K562 (cell line): ENCODE measurements at regions of chr2 and their contacts with region 1.

Region 1: DNA sequence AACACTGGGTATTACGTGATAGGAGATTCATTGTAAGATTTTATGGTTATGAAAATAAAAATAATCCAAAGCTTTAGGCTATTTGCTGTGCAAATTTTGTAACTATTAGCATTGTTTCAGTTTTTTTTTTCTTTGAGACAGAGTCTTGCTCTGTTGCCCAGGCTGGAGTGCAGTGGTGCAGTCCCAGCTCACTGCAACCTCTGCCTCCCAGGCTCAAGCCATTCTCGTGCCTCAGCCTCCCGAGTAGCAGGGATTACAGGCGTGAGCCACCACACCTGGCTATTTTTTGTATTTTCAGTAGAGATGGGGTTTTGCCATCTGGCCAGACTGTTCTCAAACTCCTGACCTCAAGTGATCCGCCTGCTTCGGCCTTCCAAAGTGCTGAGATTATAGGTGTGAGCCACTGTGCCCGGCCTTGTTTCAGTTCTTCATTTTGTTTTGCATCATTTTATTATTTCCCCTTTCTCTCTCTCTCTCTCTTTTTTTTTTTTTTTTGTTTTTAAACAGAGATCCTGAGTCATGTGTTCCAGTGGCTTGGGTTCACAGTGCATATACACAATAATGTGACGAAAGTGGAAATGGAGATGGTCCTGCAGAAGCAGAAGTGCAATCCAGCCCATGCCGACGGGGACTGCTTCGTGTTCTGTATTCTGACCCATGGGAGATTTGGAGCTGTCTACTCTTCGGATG is 25.8 kb downstream of the CASP10 start:
- DNase-seq: no peak
- ATAC-seq: no peak
- H3K4me3 ChIP-seq: no peak overlapping the region
- H3K27ac ChIP-seq: no peak overlapping the region
- H3K4me1 ChIP-seq: no peaks in the 10 kb centered on the region
- H3K27me3 ChIP-seq: no peaks in the 10 kb centered on the region
- CTCF ChIP-seq: no peak
- EP300 ChIP-seq: no peak
- POLR2A ChIP-seq: no peak
- RAD21 ChIP-seq: no peak

Region 2: DNA sequence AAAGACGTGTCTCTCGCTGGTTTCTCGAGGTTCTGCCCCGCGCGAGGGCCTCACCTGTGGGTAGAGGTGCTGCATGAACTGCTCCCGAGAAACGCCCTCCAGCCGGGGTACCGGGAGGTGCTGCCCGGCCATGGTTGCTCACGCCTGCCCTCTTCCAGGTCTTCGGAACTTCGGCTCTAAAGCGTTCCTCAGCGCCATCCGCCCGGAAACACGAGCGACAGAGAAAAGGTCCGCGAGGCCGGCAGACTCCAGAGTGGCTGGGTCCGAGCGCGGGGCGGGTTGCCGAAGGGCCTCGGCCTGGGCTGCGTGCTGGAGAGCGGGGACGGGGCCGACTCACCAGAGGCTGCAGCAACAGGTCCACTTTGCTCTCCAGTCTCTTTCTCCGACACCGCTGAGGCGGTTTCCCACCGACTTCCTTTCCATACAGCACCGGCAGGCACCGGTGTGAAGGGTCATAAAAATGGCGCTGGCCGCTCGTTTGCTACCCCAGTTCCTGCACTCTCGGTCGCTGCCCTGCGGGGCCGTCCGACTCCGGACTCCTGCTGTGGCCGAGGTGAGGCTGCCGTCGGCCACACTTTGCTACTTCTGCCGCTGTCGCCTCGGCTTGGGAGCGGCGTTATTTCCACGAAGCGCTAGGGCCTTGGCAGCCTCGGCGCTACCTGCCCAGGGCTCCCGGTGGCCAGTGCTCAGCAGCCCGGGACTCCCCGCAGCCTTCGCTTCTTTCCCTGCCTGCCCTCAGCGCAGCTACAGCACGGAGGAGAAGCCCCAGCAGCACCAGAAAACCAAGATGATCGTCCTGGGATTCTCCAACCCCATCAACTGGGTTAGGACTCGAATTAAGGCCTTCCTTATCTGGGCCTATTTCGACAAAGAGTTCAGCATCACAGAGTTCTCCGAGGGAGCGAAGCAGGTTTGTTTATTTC is 1253.1 kb before region 1 on chr2 and contains the starts of genes MAIP1 and TYW5:
- CTCF ChIA-PET with region 1: no interaction called
- POLR2A ChIA-PET with region 1: no interaction called
- in situ Hi-C with region 1: loop called (anchors 25 kb)
- intact Hi-C with region 1: no loop called
- DNase-seq: peak; percentile 58 to 80 (median 72)
- ATAC-seq: peak; percentile 90
- H3K4me3 ChIP-seq: peak within 1 kb of the TSS; percentile 68
- H3K27ac ChIP-seq: peak within 1 kb of the TSS; percentile 92
- H3K4me1 ChIP-seq: peaks cover 2 to 15% of the 10 kb centered on the region in 2 experiments; a peak in 3 of 5 replicates
- H3K27me3 ChIP-seq: no peaks in the 10 kb centered on the region
- CTCF ChIP-seq: peak in 2 of 3 experiments; percentile 7 to 19; a peak in 1 of 6 replicates
- EP300 ChIP-seq: no peak
- POLR2A ChIP-seq: peak; percentile 83
- RAD21 ChIP-seq: no peak
- polyA plus RNA-seq, gene MAIP1: 3.6 to 7.9 TPM
- polyA plus RNA-seq, gene TYW5: 4.1 to 4.3 TPM

Region 3: GRCh38 chr2:201158111-201158929 is 50.4 kb before region 1 on chr2:
- CTCF ChIA-PET with region 1: no interaction called
- POLR2A ChIA-PET with region 1: no interaction called
- in situ Hi-C with region 1: no loop called
- intact Hi-C with region 1: no loop called
- DNase-seq: peak; percentile 42 to 82 (median 60)
- ATAC-seq: peak; percentile 94
- H3K4me3 ChIP-seq: no peak overlapping the region
- H3K27ac ChIP-seq: peak overlapping the region; percentile 66
- H3K4me1 ChIP-seq: peaks cover 7 to 17% of the 10 kb centered on the region in 2 experiments; a peak in 4 of 5 replicates
- H3K27me3 ChIP-seq: no peaks in the 10 kb centered on the region
- CTCF ChIP-seq: peak; percentile 61 to 84 (median 75)
- EP300 ChIP-seq: peak; percentile 74
- POLR2A ChIP-seq: no peak
- RAD21 ChIP-seq: peak; percentile 86 to 90

Region 4: DNA sequence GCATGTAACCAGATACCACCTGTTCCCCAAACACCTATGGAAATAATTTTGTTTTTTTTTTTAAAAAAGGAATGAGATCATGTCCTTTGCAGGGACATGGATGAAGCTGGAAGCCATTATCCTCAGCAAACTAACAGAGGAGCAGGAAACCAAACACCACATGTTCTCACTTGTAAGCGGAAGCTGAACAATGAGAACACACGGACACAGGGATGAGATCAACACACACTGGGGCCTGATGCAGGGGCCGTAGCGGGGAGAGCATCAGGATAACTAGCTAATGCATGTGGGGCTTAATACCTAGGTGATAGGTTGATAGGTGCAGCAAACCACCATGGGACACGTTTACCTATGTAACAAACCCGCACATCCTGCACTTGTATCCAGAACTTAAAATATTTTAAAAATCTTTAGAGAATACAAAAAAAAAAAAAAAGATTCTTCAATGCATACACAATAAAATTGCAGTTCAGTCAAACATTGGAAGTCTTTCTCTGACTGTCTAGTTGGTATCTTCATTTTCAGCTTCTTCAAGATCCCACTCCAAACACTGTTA is 37.4 kb before region 1 on chr2:
- CTCF ChIA-PET with region 1: no interaction called
- POLR2A ChIA-PET with region 1: no interaction called
- in situ Hi-C with region 1: no loop called
- intact Hi-C with region 1: no loop called
- DNase-seq: no peak
- ATAC-seq: no peak
- H3K4me3 ChIP-seq: no peak overlapping the region
- H3K27ac ChIP-seq: no peak overlapping the region
- H3K4me1 ChIP-seq: peaks cover 0 to 6% of the 10 kb centered on the region in 2 experiments; a peak in 3 of 5 replicates
- H3K27me3 ChIP-seq: no peaks in the 10 kb centered on the region
- CTCF ChIP-seq: no peak
- EP300 ChIP-seq: no peak
- POLR2A ChIP-seq: no peak
- RAD21 ChIP-seq: no peak